Right cardiac atrium (tissue), 5 donors: ENCODE measurements at regions of chr16 and their contacts with region 1.

Region 1: GRCh38 chr16:83356266-83356665 is 451.5 kb upstream of the HSBP1 start:
- DNase-seq: no peak
- ATAC-seq: peak; percentile 59 to 68
- H3K4me3 ChIP-seq: no peak overlapping the region
- H3K27ac ChIP-seq: no peak overlapping the region
- H3K4me1 ChIP-seq: no peaks in the 10 kb centered on the region
- H3K27me3 ChIP-seq: no peaks in the 10 kb centered on the region

Region 2: GRCh38 chr16:83200005-83200779 is 156.1 kb before region 1 on chr16:
- intact Hi-C with region 1: loop called in 1 of 4 experiments (anchors 10 kb)
- DNase-seq: peak in 2 of 3 donors; percentile 15 to 58
- ATAC-seq: peak; percentile 62 to 74
- H3K4me3 ChIP-seq: no peak overlapping the region
- H3K27ac ChIP-seq: no peak overlapping the region
- H3K4me1 ChIP-seq: no peaks in the 10 kb centered on the region
- H3K27me3 ChIP-seq: no peaks in the 10 kb centered on the region

Region 3: GRCh38 chr16:83305092-83305491 is 51.2 kb before region 1 on chr16:
- intact Hi-C with region 1: no loop called
- DNase-seq: no peak
- ATAC-seq: no peak
- H3K4me3 ChIP-seq: no peak overlapping the region
- H3K27ac ChIP-seq: no peak overlapping the region
- H3K4me1 ChIP-seq: no peaks in the 10 kb centered on the region
- H3K27me3 ChIP-seq: no peaks in the 10 kb centered on the region

Region 4: DNA sequence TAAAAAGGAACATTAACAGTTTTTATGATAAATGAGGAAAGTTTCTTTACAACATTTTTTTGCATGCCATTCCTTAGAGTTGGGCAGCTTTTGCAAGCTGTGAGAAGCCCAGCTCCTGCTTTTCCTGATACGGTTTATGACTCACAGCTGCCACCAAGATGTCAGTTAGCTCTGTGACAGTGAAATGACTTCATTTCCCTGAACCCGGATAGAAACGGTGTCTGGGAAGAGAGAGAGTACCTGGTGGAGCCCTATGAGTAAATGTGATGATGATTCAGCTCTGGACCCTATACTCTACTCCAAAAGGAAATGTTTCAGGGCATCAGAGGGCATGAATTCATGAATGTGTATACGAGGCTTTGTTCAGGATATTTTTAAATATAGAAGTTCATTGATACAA is 85.3 kb after region 1 on chr16:
- intact Hi-C with region 1: no loop called
- DNase-seq: no peak
- ATAC-seq: no peak
- H3K4me3 ChIP-seq: no peak overlapping the region
- H3K27ac ChIP-seq: no peak overlapping the region
- H3K4me1 ChIP-seq: no peaks in the 10 kb centered on the region
- H3K27me3 ChIP-seq: no peaks in the 10 kb centered on the region